B cell (primary cell): ENCODE measurements at regions of chr12 and their contacts with region 1.

Region 1: DNA sequence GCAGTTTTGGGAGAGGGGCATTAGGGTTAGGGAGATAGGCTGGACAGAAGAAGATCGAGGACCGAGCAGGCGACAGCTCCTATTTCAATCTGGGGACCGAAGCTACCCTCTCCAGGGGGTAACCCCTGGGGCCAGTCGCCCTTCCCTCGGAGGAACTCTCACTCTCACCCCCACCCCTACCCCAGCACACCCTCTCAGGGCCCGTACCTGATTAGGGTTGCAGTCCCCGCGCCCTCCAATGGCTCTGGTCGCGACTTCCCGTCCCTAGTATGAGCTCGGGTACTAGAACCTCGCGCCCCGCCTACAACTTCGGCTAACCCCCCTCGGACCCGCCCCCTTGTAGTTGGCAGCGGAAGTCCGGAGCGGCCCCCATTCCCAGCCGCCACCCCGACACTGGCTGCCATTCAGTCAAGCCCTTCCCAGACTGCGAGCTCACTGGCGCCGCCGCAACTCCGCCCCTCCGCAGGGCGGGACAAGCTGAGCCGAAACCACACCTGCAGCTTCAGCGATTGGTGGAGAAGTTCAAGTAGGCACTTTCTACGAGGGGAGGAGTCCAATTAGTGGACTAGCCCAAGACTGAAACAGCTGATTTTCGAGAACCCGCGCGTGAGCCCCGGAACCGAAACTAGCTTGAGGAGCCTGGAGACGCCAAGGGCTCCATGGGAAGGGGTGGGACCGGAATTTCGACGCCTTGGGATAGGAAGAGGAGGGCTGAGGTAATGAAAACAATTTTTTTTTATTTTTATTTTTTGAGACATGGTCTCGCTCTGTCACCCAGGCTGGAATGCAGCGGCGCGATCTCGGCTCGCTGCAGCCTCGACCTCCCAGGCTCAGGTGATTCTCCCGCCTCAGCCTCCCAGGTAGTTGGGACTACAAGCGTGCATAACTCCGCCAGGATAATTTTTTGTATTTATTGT is at the start of gene STAT2:
- DNase-seq: peak; percentile 99
- ATAC-seq: peak; percentile 93
- H3K4me3 ChIP-seq: peak within 1 kb of the TSS; percentile 55 to 97 (median 76)
- H3K4me3 Mint-ChIP-seq: peak within 1 kb of the TSS; percentile 89
- H3K27ac ChIP-seq: peak within 1 kb of the TSS; percentile 37 to 72
- H3K27ac Mint-ChIP-seq: peak within 1 kb of the TSS; percentile 92
- H3K4me1 ChIP-seq: peaks cover 15 to 24% of the 10 kb centered on the region in 2 donors
- H3K4me1 Mint-ChIP-seq: peaks cover 29% of the 10 kb centered on the region
- H3K27me3 ChIP-seq: no peaks in the 10 kb centered on the region
- H3K27me3 Mint-ChIP-seq: no peaks in the 10 kb centered on the region
- CTCF ChIP-seq: no peak
- total RNA-seq, gene STAT2: 298 and 309 TPM in 2 replicates

Region 2: DNA sequence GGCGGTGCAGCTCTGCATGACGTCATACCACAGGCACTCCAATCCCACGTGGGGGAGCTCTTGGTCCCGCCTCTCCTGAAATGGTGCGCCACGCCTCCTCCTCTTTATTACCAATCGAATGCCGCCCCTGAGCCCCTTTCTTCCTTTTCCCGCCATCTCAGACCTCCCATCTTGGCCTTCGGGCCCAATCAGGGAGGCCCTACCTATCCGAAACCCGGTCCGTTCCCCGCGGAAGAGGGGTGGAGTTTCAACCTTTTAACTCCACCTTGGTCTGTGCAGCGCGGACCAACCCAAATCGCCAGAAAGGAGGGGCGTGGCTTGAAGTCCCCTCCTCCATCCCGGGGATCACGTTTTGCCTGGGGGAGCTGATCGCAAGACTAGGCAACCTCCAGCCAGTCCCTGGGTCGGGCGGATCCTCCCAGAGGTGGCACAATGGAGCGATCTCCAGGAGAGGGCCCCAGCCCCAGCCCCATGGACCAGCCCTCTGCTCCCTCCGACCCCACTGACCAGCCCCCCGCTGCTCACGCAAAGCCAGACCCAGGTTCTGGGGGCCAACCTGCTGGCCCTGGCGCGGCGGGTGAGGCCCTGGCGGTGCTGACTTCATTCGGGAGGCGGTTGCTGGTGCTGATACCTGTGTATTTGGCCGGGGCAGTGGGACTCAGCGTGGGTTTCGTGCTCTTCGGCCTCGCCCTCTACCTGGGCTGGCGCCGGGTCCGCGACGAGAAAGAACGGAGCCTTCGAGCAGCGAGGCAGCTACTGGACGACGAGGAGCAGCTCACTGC is 232.0 kb before region 1 on chr12 and contains the start of gene ESYT1:
- CTCF ChIA-PET with region 1: no interaction called
- POLR2A ChIA-PET with region 1: interaction called, 3 read pairs
- intact Hi-C with region 1: loop called (anchors 1 kb)
- DNase-seq: peak; percentile 99
- ATAC-seq: peak; percentile 85
- H3K4me3 ChIP-seq: peak within 1 kb of the TSS; percentile 88 to 95 (median 92)
- H3K4me3 Mint-ChIP-seq: peak within 1 kb of the TSS; percentile 100
- H3K27ac ChIP-seq: peak within 1 kb of the TSS; percentile 76 to 80
- H3K27ac Mint-ChIP-seq: peak within 1 kb of the TSS; percentile 98
- H3K4me1 ChIP-seq: peaks cover 46 to 54% of the 10 kb centered on the region in 2 donors
- H3K4me1 Mint-ChIP-seq: peaks cover 68% of the 10 kb centered on the region
- H3K27me3 ChIP-seq: no peaks in the 10 kb centered on the region
- H3K27me3 Mint-ChIP-seq: no peaks in the 10 kb centered on the region
- CTCF ChIP-seq: no peak
- total RNA-seq, gene ESYT1: 151 and 154 TPM in 2 replicates

Region 3: GRCh38 chr12:56266693-56267442 is 93.2 kb before region 1 on chr12 and contains the start of gene COQ10A:
- CTCF ChIA-PET with region 1: no interaction called
- POLR2A ChIA-PET with region 1: no interaction called
- intact Hi-C with region 1: loop called (anchors 1 kb)
- DNase-seq: peak; percentile 94
- ATAC-seq: peak; percentile 89
- H3K4me3 ChIP-seq: peak within 1 kb of the TSS; percentile 65 to 86 (median 75)
- H3K4me3 Mint-ChIP-seq: peak within 1 kb of the TSS; percentile 91
- H3K27ac ChIP-seq: peak within 1 kb of the TSS; percentile 94
- H3K27ac Mint-ChIP-seq: peak within 1 kb of the TSS; percentile 95
- H3K4me1 ChIP-seq: peaks cover 10 to 15% of the 10 kb centered on the region in 2 donors
- H3K4me1 Mint-ChIP-seq: peaks cover 20% of the 10 kb centered on the region
- H3K27me3 ChIP-seq: no peaks in the 10 kb centered on the region
- H3K27me3 Mint-ChIP-seq: no peaks in the 10 kb centered on the region
- CTCF ChIP-seq: peak; percentile 72
- total RNA-seq, gene COQ10A: 73.5 and 76.3 TPM in 2 replicates

Region 4: GRCh38 chr12:56315622-56316473 is 44.3 kb before region 1 on chr12 and contains the start of gene CNPY2:
- CTCF ChIA-PET with region 1: interaction called, 16 read pairs
- POLR2A ChIA-PET with region 1: interaction called, 11 read pairs
- intact Hi-C with region 1: loop called (anchors 1 kb)
- DNase-seq: peak; percentile 99
- ATAC-seq: peak; percentile 86
- H3K4me3 ChIP-seq: peak within 1 kb of the TSS; percentile 78 to 94 (median 91)
- H3K4me3 Mint-ChIP-seq: peak within 1 kb of the TSS; percentile 99
- H3K27ac ChIP-seq: peak within 1 kb of the TSS; percentile 67 to 90
- H3K27ac Mint-ChIP-seq: peak within 1 kb of the TSS; percentile 99
- H3K4me1 ChIP-seq: peaks cover 12 to 15% of the 10 kb centered on the region in 2 donors
- H3K4me1 Mint-ChIP-seq: peaks cover 10% of the 10 kb centered on the region
- H3K27me3 ChIP-seq: no peaks in the 10 kb centered on the region
- H3K27me3 Mint-ChIP-seq: no peaks in the 10 kb centered on the region
- CTCF ChIP-seq: no peak
- total RNA-seq, gene CNPY2: 89.0 and 91.2 TPM in 2 replicates

Region 5: GRCh38 chr12:56348776-56349175 is 11.3 kb before region 1 on chr12:
- CTCF ChIA-PET with region 1: interaction called, 11 read pairs
- POLR2A ChIA-PET with region 1: no interaction called
- intact Hi-C with region 1: no loop called
- DNase-seq: no peak
- ATAC-seq: no peak
- H3K4me3 ChIP-seq: no peak overlapping the region
- H3K4me3 Mint-ChIP-seq: no peak overlapping the region
- H3K27ac ChIP-seq: no peak overlapping the region
- H3K27ac Mint-ChIP-seq: no peak overlapping the region
- H3K4me1 ChIP-seq: no peaks in the 10 kb centered on the region
- H3K4me1 Mint-ChIP-seq: no peaks in the 10 kb centered on the region
- H3K27me3 ChIP-seq: no peaks in the 10 kb centered on the region
- H3K27me3 Mint-ChIP-seq: no peaks in the 10 kb centered on the region
- CTCF ChIP-seq: no peak

Region 6: DNA sequence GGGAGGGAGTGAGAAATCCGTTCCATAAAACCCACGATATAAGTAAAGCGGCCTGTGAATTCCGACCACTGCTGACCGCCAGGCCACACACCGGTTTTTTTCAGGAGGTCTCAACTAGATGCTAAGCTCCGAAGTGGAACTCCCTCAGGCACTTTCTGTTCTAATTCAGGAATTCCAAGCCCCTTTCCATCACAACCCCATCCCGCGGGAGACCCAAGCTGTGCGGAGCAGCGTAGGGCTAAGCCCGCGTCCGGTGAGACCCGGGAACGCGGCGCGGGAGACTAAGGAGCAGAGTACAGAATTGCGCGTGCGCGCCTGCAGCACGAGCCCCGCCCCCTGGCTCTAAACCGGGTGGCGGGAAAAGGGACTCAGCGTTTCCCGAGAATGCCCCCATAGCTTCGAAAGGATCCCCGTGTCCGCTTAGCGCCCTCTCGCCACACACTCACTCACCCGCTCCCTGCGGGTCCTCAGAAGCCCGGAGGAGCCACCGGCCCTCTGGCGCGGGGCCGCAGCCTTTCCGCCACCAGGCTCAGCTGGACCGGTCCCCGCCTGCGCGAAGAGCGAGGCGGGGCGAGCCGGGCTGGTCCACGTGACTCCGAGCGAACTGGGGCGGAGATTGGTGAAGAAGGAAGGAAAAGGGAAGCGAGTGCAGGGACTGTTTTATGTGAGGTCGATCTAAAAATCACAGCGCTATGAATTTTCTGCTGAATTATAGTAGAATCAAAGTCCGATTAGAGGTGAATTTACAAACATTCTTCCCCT is 88.9 kb after region 1 on chr12 and contains the start of gene TIMELESS:
- CTCF ChIA-PET with region 1: interaction called, 12 read pairs
- POLR2A ChIA-PET with region 1: interaction called, 21 read pairs
- intact Hi-C with region 1: loop called (anchors 1 kb)
- DNase-seq: peak; percentile 95
- ATAC-seq: peak; percentile 96
- H3K4me3 ChIP-seq: peak within 1 kb of the TSS; percentile 69 to 98 (median 83)
- H3K4me3 Mint-ChIP-seq: peak within 1 kb of the TSS; percentile 90
- H3K27ac ChIP-seq: peak within 1 kb of the TSS; percentile 53 to 85
- H3K27ac Mint-ChIP-seq: peak within 1 kb of the TSS; percentile 92
- H3K4me1 ChIP-seq: peaks cover 10 to 12% of the 10 kb centered on the region in 2 donors
- H3K4me1 Mint-ChIP-seq: peaks cover 23% of the 10 kb centered on the region
- H3K27me3 ChIP-seq: no peaks in the 10 kb centered on the region
- H3K27me3 Mint-ChIP-seq: no peaks in the 10 kb centered on the region
- CTCF ChIP-seq: no peak
- total RNA-seq, gene TIMELESS: 44.4 and 46.6 TPM in 2 replicates